Stomach (tissue), 19 donors: ENCODE measurements at regions of chr10 and their contacts with region 1.

Region 1: GRCh38 chr10:71952745-71953144 is 11.4 kb upstream of the CHST3 start:
- DNase-seq: no peak
- H3K4me3 ChIP-seq: no peak overlapping the region
- H3K27ac ChIP-seq: no peak overlapping the region
- H3K4me1 ChIP-seq: peaks cover 0 to 9% (median 3%) of the 10 kb centered on the region in 4 donors
- H3K27me3 ChIP-seq: no peaks in the 10 kb centered on the region
- CTCF ChIP-seq: no peak
- EP300 ChIP-seq: no peak
- POLR2A ChIP-seq: no peak

Region 2: GRCh38 chr10:72038458-72039001 is 85.8 kb after region 1 on chr10:
- intact Hi-C with region 1: loop called (anchors 5 kb)
- DNase-seq: no peak
- H3K4me3 ChIP-seq: no peak overlapping the region
- H3K27ac ChIP-seq: no peak overlapping the region
- H3K4me1 ChIP-seq: peaks cover 0 to 12% (median 5%) of the 10 kb centered on the region in 4 donors
- H3K27me3 ChIP-seq: no peaks in the 10 kb centered on the region
- CTCF ChIP-seq: no peak
- EP300 ChIP-seq: no peak
- POLR2A ChIP-seq: no peak